Heart left ventricle (tissue), 16 donors: ENCODE measurements at regions of chr13 and their contacts with region 1.

Region 1: DNA sequence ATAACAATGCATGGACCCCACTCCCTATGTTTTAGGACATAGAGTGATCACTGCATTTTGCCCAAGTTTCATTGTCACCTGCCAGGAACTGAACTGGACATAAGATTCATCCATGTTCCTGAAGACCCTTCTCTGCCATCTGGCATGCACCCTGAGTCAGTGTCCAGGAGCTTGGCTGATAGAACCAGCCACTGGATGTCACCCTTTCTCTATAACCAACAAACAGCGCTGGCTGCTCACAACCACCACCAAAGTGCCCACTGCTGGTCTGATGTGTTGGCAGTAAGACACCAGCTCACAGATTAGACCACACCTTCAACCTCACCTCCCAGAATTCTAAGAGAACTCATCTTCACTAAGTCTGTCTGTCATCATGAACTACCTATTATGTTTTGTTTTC is 333.4 kb downstream of the ITGBL1 start:
- DNase-seq: peak in 4 of 5 donors; percentile 21 to 42 (median 32)
- ATAC-seq: peak; percentile 77 to 94 (median 90)
- H3K4me3 ChIP-seq: no peak overlapping the region
- H3K27ac ChIP-seq: no peak overlapping the region
- H3K4me1 ChIP-seq: no peaks in the 10 kb centered on the region
- H3K27me3 ChIP-seq: no peaks in the 10 kb centered on the region
- CTCF ChIP-seq: peak in 11 of 12 donors; percentile 13 to 60 (median 44)
- POLR2A ChIP-seq: no peak

Region 2: DNA sequence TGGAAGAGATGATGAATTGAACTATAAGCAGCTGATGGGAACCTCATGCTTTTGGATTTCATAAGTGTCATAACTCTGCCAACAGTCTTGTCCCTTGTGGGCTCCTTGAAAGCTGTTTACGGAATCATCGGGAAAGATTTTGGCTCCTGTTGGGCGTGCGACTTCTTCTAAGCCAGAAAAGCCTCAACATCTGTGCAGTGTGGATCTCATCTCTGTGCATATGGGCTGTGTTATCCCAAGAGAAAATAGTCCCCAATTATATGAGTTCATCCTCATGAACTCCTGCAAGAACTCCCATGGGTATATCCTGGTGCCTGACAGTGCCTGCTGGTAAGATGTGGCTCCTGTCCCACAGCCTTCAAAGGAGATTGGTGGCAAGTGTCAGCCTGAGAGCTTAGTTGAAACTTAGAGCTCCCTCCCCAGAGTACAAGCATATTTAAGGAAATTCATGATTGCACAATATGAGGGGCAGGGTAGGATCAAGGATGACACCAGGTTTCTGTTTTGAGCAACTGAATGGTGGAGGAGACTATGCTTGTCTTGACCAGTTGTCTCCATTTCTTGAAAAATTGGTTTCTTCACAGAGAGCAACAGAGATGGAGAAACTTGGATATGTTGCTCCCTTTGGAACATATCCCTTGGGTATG is 89.9 kb before region 1 on chr13:
- intact Hi-C with region 1: no loop called
- DNase-seq: peak in 2 of 5 donors; percentile 32 to 47
- ATAC-seq: peak in 3 of 4 donors; percentile 35 to 58 (median 55)
- H3K4me3 ChIP-seq: no peak overlapping the region
- H3K27ac ChIP-seq: no peak overlapping the region
- H3K4me1 ChIP-seq: peaks cover 0 to 23% (median 0%) of the 10 kb centered on the region in 12 donors
- H3K27me3 ChIP-seq: no peaks in the 10 kb centered on the region
- CTCF ChIP-seq: no peak
- POLR2A ChIP-seq: no peak

Region 3: GRCh38 chr13:101916108-101916757 is 130.4 kb after region 1 on chr13:
- intact Hi-C with region 1: loop called (anchors 2 to 10 kb)
- DNase-seq: peak; percentile 25 to 66 (median 45)
- ATAC-seq: peak; percentile 68 to 90 (median 84)
- H3K4me3 ChIP-seq: peak overlapping the region; percentile 29 to 59 (median 48)
- H3K27ac ChIP-seq: no peak overlapping the region
- H3K4me1 ChIP-seq: peaks cover 0 to 21% (median 4%) of the 10 kb centered on the region in 12 donors
- H3K27me3 ChIP-seq: peaks cover 9 to 75% (median 38%) of the 10 kb centered on the region in 9 donors
- CTCF ChIP-seq: peak in 11 of 12 donors; percentile 11 to 56 (median 43)
- POLR2A ChIP-seq: no peak